ENCODE measurements at regions of chr11 and their contacts with region 1.

Region 1: GRCh38 chr11:46308631-46309419 is 31.4 kb downstream of the CREB3L1 start:
- DNase-seq: peak; percentile 60 to 89
- H3K4me3 ChIP-seq: no peak overlapping the region
- H3K27ac ChIP-seq: no peak overlapping the region
- H3K4me1 ChIP-seq: peaks cover 0 to 12% (median 7%) of the 10 kb centered on the region in 4 experiments; a peak in 6 of 7 replicates
- H3K27me3 ChIP-seq: no peaks in the 10 kb centered on the region
- CTCF ChIP-seq: peak; percentile 89 to 98 (median 94)
- EP300 ChIP-seq: no peak
- POLR2A ChIP-seq: no peak
- RAD21 ChIP-seq: peak; percentile 88 to 93

Region 2: GRCh38 chr11:46117842-46118241 is 191.0 kb before region 1 on chr11:
- CTCF ChIA-PET with region 1: no interaction called
- POLR2A ChIA-PET with region 1: no interaction called
- DNase-seq: no peak
- H3K4me3 ChIP-seq: peak overlapping the region in 1 of 4 experiments; percentile 97; a peak in 2 of 8 replicates
- H3K27ac ChIP-seq: no peak overlapping the region
- H3K4me1 ChIP-seq: peaks cover 0 to 5% (median 1%) of the 10 kb centered on the region in 4 experiments; a peak in 4 of 7 replicates
- H3K27me3 ChIP-seq: no peaks in the 10 kb centered on the region
- CTCF ChIP-seq: peak in 2 of 3 experiments; percentile 11 to 42; a peak in 2 of 4 replicates
- EP300 ChIP-seq: no peak
- POLR2A ChIP-seq: no peak
- RAD21 ChIP-seq: peak; percentile 13 to 34; a peak in 3 of 4 replicates

Region 3: DNA sequence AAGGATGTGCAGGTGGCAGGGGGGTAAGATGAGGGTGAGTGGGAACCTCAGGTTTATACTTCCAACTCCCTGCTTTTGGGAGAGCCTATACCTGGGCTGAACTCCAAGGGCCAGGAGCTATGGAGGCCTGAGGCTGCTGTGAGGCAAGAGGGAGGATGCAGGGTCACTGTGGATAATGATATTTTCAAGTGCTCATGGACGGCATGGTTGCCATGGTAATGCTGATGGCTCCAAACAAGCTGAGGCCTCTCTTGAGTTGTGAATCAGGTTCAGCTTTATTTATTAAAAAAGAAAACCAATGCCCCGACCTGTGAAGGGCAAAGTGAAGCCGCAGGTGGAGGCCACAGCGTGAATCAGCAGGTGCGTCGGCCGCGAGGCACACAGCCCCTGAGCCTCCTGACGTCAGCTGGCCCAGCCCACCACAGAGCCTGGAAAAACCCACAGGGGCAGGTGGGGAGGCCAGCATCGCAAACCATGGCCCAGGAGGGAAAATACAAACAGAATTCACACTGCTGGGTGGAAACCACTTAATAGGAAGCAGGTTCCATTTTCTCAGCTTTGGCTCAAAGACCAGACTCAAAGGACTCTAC is 48.8 kb before region 1 on chr11:
- CTCF ChIA-PET with region 1: interaction called, 858 read pairs
- POLR2A ChIA-PET with region 1: no interaction called
- DNase-seq: no peak
- H3K4me3 ChIP-seq: no peak overlapping the region
- H3K27ac ChIP-seq: no peak overlapping the region
- H3K4me1 ChIP-seq: 0 out of 7 replicates have a peak, but pooled peaks cover 0 to 2% (median 0%) of the 10 kb centered on the region in 4 experiments
- H3K27me3 ChIP-seq: no peaks in the 10 kb centered on the region
- CTCF ChIP-seq: no peak
- EP300 ChIP-seq: no peak
- POLR2A ChIP-seq: no peak
- RAD21 ChIP-seq: no peak

Region 4: GRCh38 chr11:46272816-46273427 is 35.9 kb before region 1 on chr11:
- CTCF ChIA-PET with region 1: interaction called, 224 read pairs
- POLR2A ChIA-PET with region 1: interaction called, 8 read pairs
- DNase-seq: no peak
- H3K4me3 ChIP-seq: no peak overlapping the region
- H3K27ac ChIP-seq: no peak overlapping the region
- H3K4me1 ChIP-seq: peaks cover 2 to 14% (median 6%) of the 10 kb centered on the region in 4 experiments; a peak in 4 of 7 replicates
- H3K27me3 ChIP-seq: peaks cover 0 to 4% (median 4%) of the 10 kb centered on the region in 4 experiments; a peak in 2 of 7 replicates
- CTCF ChIP-seq: no peak
- EP300 ChIP-seq: no peak
- POLR2A ChIP-seq: no peak
- RAD21 ChIP-seq: no peak

Region 5: GRCh38 chr11:46278387-46279125 is 30.3 kb before region 1 on chr11:
- CTCF ChIA-PET with region 1: interaction called, 224 read pairs
- POLR2A ChIA-PET with region 1: interaction called, 8 read pairs
- DNase-seq: peak in 1 of 2 experiments; percentile 92
- H3K4me3 ChIP-seq: peak overlapping the region; percentile 54 to 81 (median 64)
- H3K27ac ChIP-seq: no peak overlapping the region
- H3K4me1 ChIP-seq: peaks cover 18 to 35% (median 24%) of the 10 kb centered on the region in 4 experiments; a peak in 6 of 7 replicates
- H3K27me3 ChIP-seq: no peaks in the 10 kb centered on the region
- CTCF ChIP-seq: peak; percentile 68 to 86 (median 72)
- EP300 ChIP-seq: no peak
- POLR2A ChIP-seq: no peak
- RAD21 ChIP-seq: peak; percentile 43 to 69

Region 6: DNA sequence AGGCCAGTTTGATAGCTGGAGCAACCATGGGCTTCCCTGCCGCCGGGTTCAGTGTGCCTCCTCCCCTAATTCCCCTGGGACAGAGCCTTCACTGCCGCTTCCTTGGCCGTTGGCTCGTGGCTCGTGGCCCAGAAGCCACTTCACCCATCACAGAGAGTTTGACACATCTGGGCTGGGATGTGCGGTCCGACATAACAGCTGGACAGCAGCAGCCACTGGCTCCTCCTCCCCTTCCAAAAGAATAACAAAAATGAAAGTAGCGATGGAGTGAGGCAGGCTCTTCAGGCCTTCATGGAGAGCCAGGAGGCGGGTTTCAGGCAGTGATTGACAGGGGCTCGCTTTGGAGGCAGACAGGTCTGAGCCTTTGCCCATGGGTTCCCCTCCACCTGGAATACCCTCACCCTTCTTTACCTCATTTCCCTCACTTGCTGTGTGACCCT is 23.2 kb before region 1 on chr11:
- CTCF ChIA-PET with region 1: interaction called, 224 read pairs
- POLR2A ChIA-PET with region 1: interaction called, 10 read pairs
- DNase-seq: no peak
- H3K4me3 ChIP-seq: no peak overlapping the region
- H3K27ac ChIP-seq: no peak overlapping the region
- H3K4me1 ChIP-seq: peaks cover 15 to 21% (median 17%) of the 10 kb centered on the region in 4 experiments
- H3K27me3 ChIP-seq: no peaks in the 10 kb centered on the region
- CTCF ChIP-seq: no peak
- EP300 ChIP-seq: no peak
- POLR2A ChIP-seq: no peak
- RAD21 ChIP-seq: no peak

Region 7: DNA sequence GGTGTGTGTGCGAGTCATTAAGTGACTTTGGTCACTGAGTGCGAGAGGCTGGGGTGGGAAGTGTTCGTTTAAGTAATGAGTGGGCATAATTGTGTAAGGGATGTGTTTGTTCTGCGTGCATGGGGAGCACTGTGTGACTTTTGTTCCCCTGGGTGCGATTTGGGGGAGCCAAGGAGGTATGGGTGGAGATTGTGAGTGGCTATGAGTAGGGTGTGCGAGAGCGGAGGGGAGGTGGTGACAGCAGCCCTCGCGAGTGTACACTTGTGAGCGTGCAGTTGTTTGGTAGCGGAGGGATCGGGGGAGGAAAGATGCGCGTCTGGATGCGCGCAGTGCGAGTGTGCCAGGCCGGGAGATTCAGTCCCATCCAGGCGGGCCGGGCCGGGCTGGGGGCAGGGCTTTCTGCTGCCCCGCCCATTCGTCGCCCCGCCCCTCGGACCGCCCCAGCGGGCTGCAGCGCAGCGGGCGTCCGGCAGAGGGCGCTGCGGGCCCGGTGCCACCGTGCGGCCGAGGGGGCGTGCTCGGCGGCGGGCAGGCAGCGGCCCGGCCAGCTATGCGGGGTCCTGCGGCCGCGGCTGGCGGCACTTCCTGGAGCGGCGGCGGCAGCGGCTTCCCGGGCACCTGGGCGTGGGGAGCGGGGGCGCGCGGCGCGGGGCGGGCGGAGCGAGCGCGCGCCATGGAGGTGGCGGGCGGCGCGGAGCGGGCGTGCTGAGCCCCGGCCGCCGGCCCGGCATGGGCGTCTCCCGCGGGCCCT is 38.2 kb after region 1 on chr11 and contains the start of gene DGKZ:
- CTCF ChIA-PET with region 1: interaction called, 107 read pairs
- POLR2A ChIA-PET with region 1: interaction called, 3 read pairs
- DNase-seq: peak in 1 of 2 experiments; percentile 98
- H3K4me3 ChIP-seq: peak within 1 kb of the TSS; percentile 71 to 83 (median 77)
- H3K27ac ChIP-seq: no peak within 1 kb of the TSS
- H3K4me1 ChIP-seq: peaks cover 26 to 47% (median 33%) of the 10 kb centered on the region in 4 experiments
- H3K27me3 ChIP-seq: peaks cover 0 to 7% (median 3%) of the 10 kb centered on the region in 4 experiments; a peak in 1 of 7 replicates
- CTCF ChIP-seq: peak; percentile 90 to 96 (median 94)
- EP300 ChIP-seq: no peak
- POLR2A ChIP-seq: peak in 1 of 2 experiments; percentile 43; a peak in 1 of 3 replicates
- RAD21 ChIP-seq: peak; percentile 31 to 66; a peak in 3 of 4 replicates
- total RNA-seq, gene DGKZ: 84.4 and 88.5 TPM in 2 replicates

Region 8: DNA sequence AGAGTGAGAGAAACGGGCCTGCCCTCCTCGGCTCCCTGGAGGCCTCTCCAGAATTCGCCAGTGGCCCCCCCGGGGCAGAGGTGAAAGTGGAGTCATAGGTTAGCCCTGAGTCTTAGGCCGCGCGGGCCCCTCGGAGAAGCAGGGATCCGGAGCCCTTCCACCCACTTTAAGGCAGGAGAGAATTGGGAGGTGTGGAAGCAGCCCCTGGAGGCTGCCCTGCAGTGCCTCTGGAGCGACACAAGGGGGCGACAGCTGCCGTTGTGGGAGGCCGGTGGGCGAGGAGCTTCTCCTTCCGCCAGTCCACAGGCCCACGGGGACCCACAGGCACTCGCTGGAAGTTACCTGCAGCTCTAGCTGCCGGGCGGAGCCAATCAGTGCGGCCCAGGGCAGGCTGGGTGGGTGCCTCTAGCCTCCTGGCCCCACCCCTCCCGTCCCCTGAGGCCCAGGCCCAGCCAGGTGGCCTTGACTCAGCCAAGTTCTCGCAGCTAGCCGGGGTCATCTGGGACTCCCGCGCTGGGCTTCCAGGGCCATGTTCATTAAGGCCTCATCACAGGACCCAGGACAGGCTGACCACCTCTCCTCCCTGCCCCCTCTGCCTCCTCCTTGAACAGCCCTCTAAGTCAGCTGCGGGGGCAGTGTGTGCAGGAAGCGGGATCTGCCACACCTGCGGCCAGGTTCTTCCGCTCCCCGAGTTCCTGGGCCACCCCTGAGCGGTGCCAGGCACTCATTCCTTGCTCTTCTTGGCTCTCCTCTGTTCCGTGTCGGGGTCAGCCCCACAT is 43.4 kb after region 1 on chr11:
- CTCF ChIA-PET with region 1: interaction called, 107 read pairs
- POLR2A ChIA-PET with region 1: no interaction called
- DNase-seq: peak in 1 of 2 experiments; percentile 92
- H3K4me3 ChIP-seq: no peak overlapping the region
- H3K27ac ChIP-seq: peak overlapping the region; percentile 29; the same call in 1 of the 2 replicates
- H3K4me1 ChIP-seq: peaks cover 7 to 38% (median 29%) of the 10 kb centered on the region in 4 experiments
- H3K27me3 ChIP-seq: no peaks in the 10 kb centered on the region
- CTCF ChIP-seq: peak; percentile 93 to 98 (median 96)
- EP300 ChIP-seq: no peak; a peak in 1 of 3 replicates
- POLR2A ChIP-seq: no peak
- RAD21 ChIP-seq: peak; percentile 69 to 77

Region 9: DNA sequence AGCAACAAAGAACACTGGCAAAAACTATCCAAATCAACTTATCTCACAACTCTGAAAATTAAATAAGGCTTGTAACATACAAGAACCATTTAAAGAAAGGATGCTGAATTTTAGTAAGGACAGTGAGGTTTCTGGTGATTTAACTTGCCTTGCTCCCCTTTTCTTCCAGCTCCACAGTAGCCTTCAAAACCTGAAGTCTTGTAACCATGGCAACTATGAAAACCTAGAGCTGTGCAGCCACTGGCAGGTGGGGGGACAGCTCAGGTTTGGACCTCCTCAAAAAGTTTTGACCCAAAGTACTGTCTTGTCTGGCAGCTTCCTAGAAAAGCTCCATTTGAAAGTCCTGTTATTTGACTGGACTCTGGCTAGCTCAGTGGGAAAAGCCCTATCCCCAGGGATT is 477.3 kb after region 1 on chr11:
- CTCF ChIA-PET with region 1: no interaction called
- POLR2A ChIA-PET with region 1: no interaction called
- DNase-seq: no peak
- H3K4me3 ChIP-seq: no peak overlapping the region
- H3K27ac ChIP-seq: no peak overlapping the region
- H3K4me1 ChIP-seq: no peaks in the 10 kb centered on the region
- H3K27me3 ChIP-seq: no peaks in the 10 kb centered on the region
- CTCF ChIP-seq: no peak
- EP300 ChIP-seq: no peak
- POLR2A ChIP-seq: no peak
- RAD21 ChIP-seq: no peak